ENCODE measurements at regions of chr9 and their contacts with region 1.

Region 1: GRCh38 chr9:134067904-134068743 is at the start of gene BRD3:
- DNase-seq: peak; percentile 82
- H3K4me3 Mint-ChIP-seq: peak within 1 kb of the TSS; percentile 90
- H3K27ac Mint-ChIP-seq: peak within 1 kb of the TSS; percentile 89
- H3K4me1 Mint-ChIP-seq: peaks cover 14% of the 10 kb centered on the region
- H3K27me3 Mint-ChIP-seq: peaks cover 18% of the 10 kb centered on the region
- total RNA-seq, gene BRD3: 34.2 and 36.7 TPM in 2 replicates

Region 2: DNA sequence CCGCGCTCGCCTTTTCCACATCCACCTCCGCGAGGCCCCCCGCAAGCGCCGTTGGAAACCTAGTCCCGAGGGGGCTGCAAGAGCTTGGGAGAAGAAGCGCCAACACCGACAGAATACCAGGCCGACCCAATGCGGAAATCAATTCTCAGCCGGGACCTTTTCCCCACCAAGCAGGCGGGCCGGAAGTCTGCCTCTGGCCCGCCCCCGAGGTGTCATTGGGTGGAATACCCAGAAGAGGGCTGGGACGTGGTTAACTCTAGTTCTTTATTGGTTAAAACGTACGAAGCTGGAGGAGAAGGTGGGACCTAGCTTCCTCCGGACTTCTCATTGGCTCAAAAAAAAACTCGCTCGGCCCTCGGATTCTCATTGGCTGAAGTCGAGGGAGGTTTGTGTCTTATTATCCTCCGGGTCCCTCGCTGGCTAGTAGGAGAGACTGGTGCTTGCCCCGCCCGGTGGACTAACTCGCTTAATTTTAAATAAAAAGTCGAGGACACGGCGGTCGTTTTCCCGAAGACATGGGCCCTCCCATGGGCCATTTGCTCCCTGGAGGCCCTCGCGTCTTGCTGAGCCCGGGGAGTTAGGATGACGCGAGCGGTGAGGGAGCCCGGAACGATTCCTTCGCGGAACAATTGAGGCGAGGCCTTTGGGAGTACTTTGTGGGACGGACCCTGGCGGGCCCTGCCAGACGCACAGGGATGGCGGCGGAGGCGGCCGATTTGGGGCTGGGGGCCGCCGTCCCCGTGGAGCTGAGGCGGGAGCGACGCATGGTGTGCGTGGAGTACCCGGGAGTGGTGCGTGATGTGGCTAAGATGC is 1037.6 kb before region 1 on chr9 and contains the start of gene GTF3C5:
- intact Hi-C with region 1: loop called (anchors 1 kb)
- DNase-seq: peak; percentile 91
- H3K4me3 Mint-ChIP-seq: peak within 1 kb of the TSS; percentile 96
- H3K27ac Mint-ChIP-seq: peak within 1 kb of the TSS; percentile 97
- H3K4me1 Mint-ChIP-seq: peaks cover 47% of the 10 kb centered on the region
- H3K27me3 Mint-ChIP-seq: no peaks in the 10 kb centered on the region
- total RNA-seq, gene GTF3C5: 87.8 and 89.0 TPM in 2 replicates

Region 3: DNA sequence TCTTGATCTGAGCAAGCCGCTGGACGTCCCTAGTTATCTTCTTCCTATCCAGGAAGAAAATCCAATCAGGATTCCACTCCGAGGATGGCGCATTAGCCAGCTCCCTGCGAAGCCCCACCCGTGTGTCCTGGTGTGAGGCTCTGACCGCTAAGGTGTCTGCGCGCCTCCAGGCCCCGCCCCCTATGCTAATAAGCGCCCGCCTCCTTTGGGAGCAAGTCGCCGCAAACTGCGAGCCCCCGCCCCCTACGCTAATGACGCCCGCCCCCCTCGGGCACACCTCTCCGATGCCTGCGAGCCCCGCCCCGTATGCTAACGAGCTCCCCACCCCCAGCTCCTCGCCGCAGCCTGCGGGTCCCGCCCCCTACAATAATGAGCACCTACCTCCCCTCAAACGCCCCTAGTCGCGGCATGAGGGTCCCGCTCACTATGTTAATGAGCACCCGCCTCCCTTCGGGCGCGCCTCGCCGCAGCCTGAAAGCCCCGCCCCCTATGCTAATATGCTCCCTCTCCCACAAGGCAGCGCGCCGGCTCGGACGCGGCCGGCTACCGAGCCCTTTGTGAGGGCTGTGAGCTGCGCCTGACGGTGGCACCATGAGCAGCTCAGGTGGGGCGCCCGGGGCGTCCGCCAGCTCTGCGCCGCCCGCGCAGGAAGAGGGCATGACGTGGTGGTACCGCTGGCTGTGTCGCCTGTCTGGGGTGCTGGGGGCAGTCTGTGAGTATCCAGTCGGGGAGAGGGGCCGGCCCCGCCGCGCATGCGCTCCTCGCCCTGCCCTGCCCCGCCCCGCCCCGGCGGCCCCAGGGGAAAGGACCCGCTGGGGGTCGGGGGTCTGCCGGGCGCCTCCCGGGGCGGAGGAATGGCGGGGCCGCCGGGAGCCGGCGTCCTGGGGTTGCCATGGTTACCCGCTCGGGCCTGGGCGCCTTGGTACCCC is 608.4 kb before region 1 on chr9 and contains the start of gene CACFD1:
- intact Hi-C with region 1: loop called (anchors 1 kb)
- DNase-seq: peak; percentile 80
- H3K4me3 Mint-ChIP-seq: peak within 1 kb of the TSS; percentile 86
- H3K27ac Mint-ChIP-seq: peak within 1 kb of the TSS; percentile 77
- H3K4me1 Mint-ChIP-seq: no peaks in the 10 kb centered on the region
- H3K27me3 Mint-ChIP-seq: peaks cover 11% of the 10 kb centered on the region
- total RNA-seq, gene CACFD1: 1.0 and 1.1 TPM in 2 replicates

Region 4: GRCh38 chr9:134010310-134011173 is 57.6 kb before region 1 on chr9:
- intact Hi-C with region 1: no loop called
- DNase-seq: no peak
- H3K4me3 Mint-ChIP-seq: no peak overlapping the region
- H3K27ac Mint-ChIP-seq: no peak overlapping the region
- H3K4me1 Mint-ChIP-seq: no peaks in the 10 kb centered on the region
- H3K27me3 Mint-ChIP-seq: peaks cover 6% of the 10 kb centered on the region

Region 5: GRCh38 chr9:134024828-134025605 is 43.1 kb before region 1 on chr9 and contains the start of gene BRD3OS:
- intact Hi-C with region 1: loop called (anchors 1 kb)
- DNase-seq: peak; percentile 92
- H3K4me3 Mint-ChIP-seq: peak within 1 kb of the TSS; percentile 79
- H3K27ac Mint-ChIP-seq: no peak within 1 kb of the TSS
- H3K4me1 Mint-ChIP-seq: no peaks in the 10 kb centered on the region
- H3K27me3 Mint-ChIP-seq: no peaks in the 10 kb centered on the region
- total RNA-seq, gene BRD3OS: 12.3 and 14.5 TPM in 2 replicates

Region 6: DNA sequence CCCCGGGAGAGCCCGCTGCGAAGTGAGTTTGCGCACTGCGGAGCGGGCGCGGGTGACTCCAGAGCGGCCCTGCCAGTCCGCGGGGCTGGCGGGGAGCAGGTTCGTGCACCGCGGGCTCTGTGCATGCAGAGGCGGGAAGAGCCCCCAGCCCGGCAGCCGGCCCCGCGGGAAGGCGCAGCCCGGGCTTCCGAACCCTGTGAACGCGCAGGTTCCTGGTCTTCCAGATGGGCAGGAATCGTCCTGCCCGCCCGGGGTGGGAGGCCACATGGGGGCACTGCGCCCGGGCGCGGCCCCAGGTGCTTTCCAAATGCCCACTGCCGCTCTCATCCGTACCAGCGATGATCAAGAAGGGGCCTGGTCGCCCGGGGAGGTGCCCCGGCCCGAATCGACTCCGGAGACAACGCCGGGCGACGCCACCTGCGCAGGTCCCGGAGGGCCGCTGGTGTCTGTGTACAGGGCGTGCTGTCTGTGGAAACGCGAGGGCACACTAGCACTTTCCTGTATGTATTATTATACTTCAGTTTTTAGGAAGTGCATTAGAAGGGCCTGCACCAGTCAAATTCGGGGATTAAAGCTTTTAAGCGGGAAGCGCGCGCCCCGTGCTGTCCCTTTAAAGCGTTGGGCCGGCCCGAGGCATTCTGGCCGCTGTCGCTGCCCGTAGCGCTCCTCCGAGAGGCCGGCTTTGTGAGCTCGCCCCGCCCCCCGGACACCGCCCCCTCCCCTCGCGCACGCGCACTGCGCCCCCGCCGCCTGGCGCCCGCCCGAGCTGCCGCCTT is 67.4 kb after region 1 on chr9 and contains the start of gene WDR5:
- intact Hi-C with region 1: loop called (anchors 1 kb)
- DNase-seq: peak; percentile 84
- H3K4me3 Mint-ChIP-seq: peak within 1 kb of the TSS; percentile 96
- H3K27ac Mint-ChIP-seq: peak within 1 kb of the TSS; percentile 93
- H3K4me1 Mint-ChIP-seq: peaks cover 29% of the 10 kb centered on the region
- H3K27me3 Mint-ChIP-seq: no peaks in the 10 kb centered on the region
- total RNA-seq, gene WDR5: 65.0 and 71.3 TPM in 2 replicates

Region 7: GRCh38 chr9:134391314-134392231 is 323.4 kb after region 1 on chr9:
- intact Hi-C with region 1: loop called (anchors 5 kb)
- DNase-seq: peak; percentile 59
- H3K4me3 Mint-ChIP-seq: peak overlapping the region; percentile 51
- H3K27ac Mint-ChIP-seq: peak overlapping the region; percentile 82
- H3K4me1 Mint-ChIP-seq: peaks cover 38% of the 10 kb centered on the region
- H3K27me3 Mint-ChIP-seq: peaks cover 33% of the 10 kb centered on the region

Measured in activated T-helper 1 cell treated with anti-CD3 and anti-CD28 coated beads, Interleukin-12 subunit alpha, Interleukin-12 subunit beta, Interleukin-2, Interleukin-4 antibody, amounts not matched to agents 30 ng/mL and 10 ng/mL and 1 ng/mL, durations not matched to agents 14 hours and 24 hours and 36 hours (primary cell).